ENCODE measurements at regions of chr10 and their contacts with region 1.

Region 1: DNA sequence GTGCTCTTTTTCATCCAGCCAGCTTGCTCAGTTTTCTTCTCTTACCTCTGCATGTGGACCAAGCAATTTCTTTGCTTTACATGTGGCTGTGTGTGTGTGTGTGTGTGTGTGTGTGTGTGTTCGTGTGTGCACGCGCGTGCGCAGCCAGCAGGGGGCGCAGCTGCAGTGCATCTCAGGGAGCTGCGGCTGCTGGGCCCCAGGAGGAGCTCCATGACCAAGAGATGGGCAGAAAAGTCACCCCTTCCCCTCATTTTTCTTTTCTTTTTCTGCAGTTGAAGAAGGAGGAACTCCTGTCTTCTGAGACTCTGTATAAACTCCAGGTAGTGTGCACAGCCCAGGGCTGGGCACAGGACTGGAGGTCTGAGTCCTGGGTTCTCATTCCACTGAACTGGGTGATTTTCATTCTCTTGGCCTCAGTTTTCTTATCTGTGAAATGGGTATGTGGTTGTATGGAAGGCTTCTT is 41.8 kb downstream of the BLNK start:
- DNase-seq: peak; percentile 75
- H3K4me3 ChIP-seq: peak overlapping the region in 1 of 2 experiments; percentile 36; a peak in 1 of 4 replicates
- H3K27ac ChIP-seq: no peak overlapping the region
- H3K4me1 ChIP-seq: no peaks in the 10 kb centered on the region; a peak in 1 of 4 replicates
- H3K27me3 ChIP-seq: no peaks in the 10 kb centered on the region; the same call in 1 of the 2 replicates
- CTCF ChIP-seq: peak; percentile 79
- EP300 ChIP-seq: no peak
- RAD21 ChIP-seq: peak; percentile 59

Region 2: GRCh38 chr10:95998255-95998784 is 231.3 kb before region 1 on chr10:
- CTCF ChIA-PET with region 1: no interaction called
- POLR2A ChIA-PET with region 1: no interaction called
- DNase-seq: no peak
- H3K4me3 ChIP-seq: no peak overlapping the region
- H3K27ac ChIP-seq: no peak overlapping the region
- H3K4me1 ChIP-seq: no peaks in the 10 kb centered on the region
- H3K27me3 ChIP-seq: no peaks in the 10 kb centered on the region
- CTCF ChIP-seq: no peak
- EP300 ChIP-seq: no peak
- RAD21 ChIP-seq: no peak

Region 3: GRCh38 chr10:96252730-96253129 is 23.1 kb after region 1 on chr10:
- CTCF ChIA-PET with region 1: interaction called, 28 read pairs
- POLR2A ChIA-PET with region 1: no interaction called
- DNase-seq: no peak
- H3K4me3 ChIP-seq: no peak overlapping the region
- H3K27ac ChIP-seq: no peak overlapping the region
- H3K4me1 ChIP-seq: no peaks in the 10 kb centered on the region; a peak in 1 of 4 replicates
- H3K27me3 ChIP-seq: no peaks in the 10 kb centered on the region
- CTCF ChIP-seq: no peak
- EP300 ChIP-seq: no peak
- RAD21 ChIP-seq: no peak

Region 4: GRCh38 chr10:96271016-96271829 is 41.6 kb after region 1 on chr10 and contains the start of gene BLNK:
- CTCF ChIA-PET with region 1: interaction called, 18 read pairs
- POLR2A ChIA-PET with region 1: no interaction called
- DNase-seq: no peak
- H3K4me3 ChIP-seq: no peak within 1 kb of the TSS; a peak in 1 of 4 replicates
- H3K27ac ChIP-seq: no peak within 1 kb of the TSS
- H3K4me1 ChIP-seq: no peaks in the 10 kb centered on the region
- H3K27me3 ChIP-seq: peaks cover 5% of the 10 kb centered on the region; the same call in 1 of the 2 replicates
- CTCF ChIP-seq: no peak
- EP300 ChIP-seq: no peak
- RAD21 ChIP-seq: no peak
- polyA plus RNA-seq, gene BLNK: not detected in 2 replicates

Region 5: DNA sequence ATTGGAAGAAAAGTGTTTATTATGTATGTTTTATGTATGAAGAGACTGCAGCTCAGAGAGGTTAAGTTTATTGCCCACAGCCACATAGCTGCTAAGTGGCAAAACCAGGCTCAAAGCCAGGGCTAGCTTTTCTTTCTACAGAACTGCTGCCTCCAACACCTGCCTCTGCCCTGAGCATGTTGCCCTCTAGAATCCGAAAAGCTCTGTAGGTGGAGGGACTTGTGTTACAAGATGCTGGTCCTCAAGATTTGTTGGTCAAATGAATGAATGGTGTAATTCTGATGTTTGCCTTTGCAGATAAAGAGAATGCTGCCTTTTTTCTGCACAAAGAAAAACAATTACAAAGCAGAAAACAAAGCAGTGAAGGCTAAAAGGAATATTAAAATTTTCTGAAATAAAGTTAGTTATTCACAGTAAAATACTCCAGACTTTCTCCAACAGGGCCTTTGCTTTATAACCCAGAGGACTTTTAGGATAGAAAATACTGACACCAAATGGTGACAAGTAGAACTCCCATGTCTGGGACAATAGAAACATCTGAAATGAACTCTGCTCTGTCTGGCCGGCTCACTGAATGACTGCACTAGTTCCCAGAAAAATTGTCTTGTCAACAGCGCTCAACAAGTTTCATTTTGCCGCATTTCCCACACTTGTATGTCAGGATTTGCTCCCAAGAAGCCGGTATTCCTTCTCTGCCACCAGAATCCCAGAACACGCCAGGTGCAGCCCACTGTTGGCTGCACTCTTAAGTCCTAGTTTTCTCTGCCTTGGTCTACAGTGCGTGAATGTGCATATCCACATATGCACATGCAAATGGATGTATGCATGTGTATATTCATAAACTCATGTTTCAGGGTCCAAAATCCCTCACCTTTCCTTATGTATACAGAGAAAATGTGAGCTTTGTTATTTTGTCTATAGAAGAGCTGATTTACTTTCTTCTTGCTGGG is 63.6 kb after region 1 on chr10:
- CTCF ChIA-PET with region 1: interaction called, 70 read pairs
- POLR2A ChIA-PET with region 1: no interaction called
- DNase-seq: peak; percentile 36
- H3K4me3 ChIP-seq: peak overlapping the region in 1 of 2 experiments; percentile 5; a peak in 1 of 4 replicates
- H3K27ac ChIP-seq: no peak overlapping the region
- H3K4me1 ChIP-seq: no peaks in the 10 kb centered on the region; a peak in 1 of 4 replicates
- H3K27me3 ChIP-seq: no peaks in the 10 kb centered on the region
- CTCF ChIP-seq: peak; percentile 64
- EP300 ChIP-seq: no peak
- RAD21 ChIP-seq: peak; percentile 83

Region 6: DNA sequence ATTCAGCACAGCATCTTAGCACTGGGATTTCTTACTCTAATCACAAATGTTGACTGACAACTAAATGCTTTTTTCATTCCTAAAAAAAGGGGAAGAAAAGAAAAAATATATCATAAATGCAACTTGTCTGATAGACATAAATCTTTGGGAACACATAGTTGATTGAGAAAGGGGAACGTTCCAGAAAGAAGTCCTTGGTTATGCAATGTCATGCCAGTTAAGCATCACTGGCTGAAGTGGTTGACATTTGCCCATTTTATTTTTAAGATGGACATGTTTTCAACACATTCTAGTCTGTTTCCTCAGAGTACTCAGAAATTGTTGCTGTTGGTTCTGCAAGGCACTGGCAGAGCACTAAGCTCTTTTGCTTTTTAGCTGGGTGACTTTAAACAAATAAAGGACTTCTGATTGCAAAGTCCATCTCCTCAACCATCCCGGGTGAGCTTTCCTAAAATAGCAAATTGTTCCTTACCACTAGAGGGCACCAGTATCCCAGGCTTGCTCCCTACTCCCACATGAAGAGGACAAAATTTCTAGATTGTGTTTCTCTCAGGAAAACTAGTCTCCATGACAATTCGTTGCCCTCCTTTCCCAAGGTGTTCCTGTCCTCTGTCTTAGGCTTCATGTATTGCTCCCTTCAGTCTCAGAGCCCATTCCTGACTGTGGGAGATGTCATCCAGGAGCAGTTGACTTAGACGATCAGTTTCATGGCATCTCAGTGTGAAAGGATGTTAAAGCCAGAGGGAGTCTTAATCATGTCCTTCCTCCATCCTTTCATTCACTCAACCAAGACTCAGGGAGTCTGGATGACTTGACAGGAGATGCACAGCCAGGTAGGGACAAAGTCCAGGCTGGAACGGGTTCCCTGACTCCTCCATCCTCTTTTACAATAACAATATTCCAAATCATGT is 105.3 kb after region 1 on chr10:
- CTCF ChIA-PET with region 1: interaction called, 11 read pairs
- POLR2A ChIA-PET with region 1: no interaction called
- DNase-seq: peak; percentile 47
- H3K4me3 ChIP-seq: no peak overlapping the region; a peak in 1 of 4 replicates
- H3K27ac ChIP-seq: no peak overlapping the region
- H3K4me1 ChIP-seq: no peaks in the 10 kb centered on the region
- H3K27me3 ChIP-seq: no peaks in the 10 kb centered on the region; the same call in 1 of the 2 replicates
- CTCF ChIP-seq: peak; percentile 78
- EP300 ChIP-seq: no peak
- RAD21 ChIP-seq: peak; percentile 57

Region 7: DNA sequence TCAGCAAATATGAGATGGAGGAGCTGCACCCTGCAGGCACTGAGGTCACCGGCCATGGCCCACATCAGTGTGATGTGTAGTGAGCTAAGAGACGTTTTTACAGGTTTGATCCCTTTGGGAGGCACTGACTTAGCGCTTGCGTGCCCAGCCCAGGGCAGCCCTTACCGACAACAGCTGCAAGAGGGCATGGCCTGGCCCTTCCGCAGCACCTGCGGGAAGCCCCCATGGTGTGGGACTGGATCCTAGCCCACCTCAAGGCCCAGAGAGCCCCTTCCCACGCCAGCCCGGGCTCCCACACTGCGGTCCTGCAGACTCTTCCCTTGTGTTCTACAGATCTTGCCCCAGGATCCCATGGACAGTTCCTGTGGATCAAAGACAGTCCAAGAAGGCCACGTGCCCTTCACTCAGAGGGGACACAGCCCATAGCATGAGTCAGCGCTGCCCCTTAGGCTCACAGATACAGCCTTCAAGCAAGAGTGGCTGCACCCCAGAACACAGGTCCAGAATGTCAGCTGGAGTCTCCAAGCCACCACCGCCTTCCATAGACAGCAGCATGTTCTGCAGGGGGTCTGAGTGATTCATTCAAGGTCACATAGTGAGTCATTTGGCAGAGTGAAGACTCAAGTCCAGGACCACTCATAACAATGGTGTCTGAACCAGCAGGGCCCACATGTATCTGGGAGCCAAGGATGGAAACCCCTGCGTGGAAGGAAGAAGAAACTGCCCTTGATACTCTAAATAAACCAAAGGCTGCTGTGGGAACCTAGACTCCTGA is 258.7 kb after region 1 on chr10:
- CTCF ChIA-PET with region 1: no interaction called
- POLR2A ChIA-PET with region 1: no interaction called
- DNase-seq: no peak
- H3K4me3 ChIP-seq: no peak overlapping the region
- H3K27ac ChIP-seq: no peak overlapping the region
- H3K4me1 ChIP-seq: no peaks in the 10 kb centered on the region
- H3K27me3 ChIP-seq: no peaks in the 10 kb centered on the region
- CTCF ChIP-seq: no peak
- EP300 ChIP-seq: no peak
- RAD21 ChIP-seq: no peak